IMR-90 (cell line): ENCODE measurements at regions of chr10 and their contacts with region 1.

Region 1: DNA sequence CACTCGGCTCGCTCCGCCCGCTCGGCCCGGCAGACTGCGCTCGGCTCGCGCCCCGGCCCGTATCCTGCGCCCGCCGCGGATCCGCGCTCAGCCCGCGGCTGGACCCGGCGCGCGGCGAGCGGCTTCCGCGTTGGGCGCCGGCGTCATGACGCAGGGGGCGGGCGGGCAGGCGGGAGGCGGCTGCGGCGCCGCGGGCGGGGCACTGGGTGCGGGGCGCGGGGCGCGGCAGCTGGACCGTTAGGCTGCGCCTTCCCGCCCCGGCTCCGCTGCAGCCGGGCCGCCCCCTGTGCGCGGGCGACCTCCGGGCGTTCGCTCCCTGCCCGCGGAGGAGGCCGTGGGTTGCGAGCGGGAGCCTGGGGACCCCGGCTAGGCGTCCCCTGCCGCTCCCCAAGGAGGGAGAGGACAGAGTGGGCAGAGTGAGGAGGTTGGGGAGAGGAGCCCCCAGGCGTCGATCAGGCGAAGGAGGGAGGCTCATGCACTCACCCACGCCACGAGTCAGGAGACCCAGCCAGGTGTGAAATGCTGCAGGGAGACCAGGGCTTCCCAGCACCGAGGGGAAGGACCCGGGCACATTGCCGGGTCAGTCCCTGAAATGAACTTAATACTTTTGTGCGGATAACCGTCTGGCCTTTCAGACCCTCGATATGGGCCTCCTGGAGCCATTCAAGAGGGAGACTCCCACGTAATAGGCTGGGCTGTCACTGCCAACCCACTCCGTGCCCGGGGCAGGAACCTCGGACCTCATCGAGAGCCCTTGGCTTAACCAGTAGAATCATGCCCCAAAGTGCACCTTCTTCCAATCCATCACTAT is at the start of gene PIP4K2A:
- DNase-seq: peak; percentile 67
- ATAC-seq: peak; percentile 93
- H3K4me3 ChIP-seq: peak within 1 kb of the TSS; percentile 100
- H3K27ac ChIP-seq: peak within 1 kb of the TSS; percentile 93
- H3K4me1 ChIP-seq: no peaks in the 10 kb centered on the region; the same call in 1 of the 2 replicates
- H3K27me3 ChIP-seq: no peaks in the 10 kb centered on the region
- CTCF ChIP-seq: no peak
- POLR2A ChIP-seq: no peak
- RAD21 ChIP-seq: no peak
- total RNA-seq, gene PIP4K2A: 18.1 and 21.9 TPM in 2 replicates

Region 2: GRCh38 chr10:22316285-22317120 is 398.2 kb before region 1 on chr10 and contains the start of gene COMMD3:
- CTCF ChIA-PET with region 1: no interaction called
- POLR2A ChIA-PET with region 1: no interaction called
- dilution Hi-C with region 1: no loop called
- in situ Hi-C with region 1: no loop called
- intact Hi-C with region 1: loop called (anchors 5 kb)
- DNase-seq: peak; percentile 86
- ATAC-seq: peak; percentile 74
- H3K4me3 ChIP-seq: peak within 1 kb of the TSS; percentile 76
- H3K27ac ChIP-seq: peak within 1 kb of the TSS; percentile 93
- H3K4me1 ChIP-seq: no peaks in the 10 kb centered on the region
- H3K27me3 ChIP-seq: peaks cover 2% of the 10 kb centered on the region; the same call in 1 of the 2 replicates
- CTCF ChIP-seq: no peak
- POLR2A ChIP-seq: no peak
- RAD21 ChIP-seq: no peak
- total RNA-seq, gene COMMD3: 33.1 and 44.8 TPM in 2 replicates

Region 3: GRCh38 chr10:22436884-22437619 is 277.6 kb before region 1 on chr10:
- CTCF ChIA-PET with region 1: no interaction called
- POLR2A ChIA-PET with region 1: no interaction called
- dilution Hi-C with region 1: no loop called
- in situ Hi-C with region 1: no loop called
- intact Hi-C with region 1: loop called (anchors 5 kb)
- DNase-seq: peak; percentile 89
- ATAC-seq: peak; percentile 83
- H3K4me3 ChIP-seq: peak overlapping the region; percentile 56
- H3K27ac ChIP-seq: peak overlapping the region; percentile 90
- H3K4me1 ChIP-seq: peaks cover 8% of the 10 kb centered on the region; the same call in 1 of the 2 replicates
- H3K27me3 ChIP-seq: peaks cover 7% of the 10 kb centered on the region
- CTCF ChIP-seq: no peak
- POLR2A ChIP-seq: peak; percentile 82; the same call in 1 of the 2 replicates
- RAD21 ChIP-seq: no peak

Region 4: GRCh38 chr10:22573820-22574569 is 140.7 kb before region 1 on chr10:
- CTCF ChIA-PET with region 1: interaction called, 5 read pairs
- POLR2A ChIA-PET with region 1: no interaction called
- dilution Hi-C with region 1: no loop called
- in situ Hi-C with region 1: no loop called
- intact Hi-C with region 1: loop called (anchors 5 kb)
- DNase-seq: peak; percentile 41
- ATAC-seq: peak; percentile 42; the same call in 1 of the 2 replicates
- H3K4me3 ChIP-seq: no peak overlapping the region
- H3K27ac ChIP-seq: no peak overlapping the region
- H3K4me1 ChIP-seq: no peaks in the 10 kb centered on the region
- H3K27me3 ChIP-seq: no peaks in the 10 kb centered on the region
- CTCF ChIP-seq: peak; percentile 53
- POLR2A ChIP-seq: no peak
- RAD21 ChIP-seq: peak; percentile 65

Region 5: GRCh38 chr10:22615819-22616499 is 98.7 kb before region 1 on chr10:
- CTCF ChIA-PET with region 1: no interaction called
- POLR2A ChIA-PET with region 1: no interaction called
- dilution Hi-C with region 1: no loop called
- in situ Hi-C with region 1: no loop called
- intact Hi-C with region 1: loop called (anchors 1 kb)
- DNase-seq: no peak
- ATAC-seq: no peak
- H3K4me3 ChIP-seq: no peak overlapping the region
- H3K27ac ChIP-seq: no peak overlapping the region
- H3K4me1 ChIP-seq: peaks cover 15% of the 10 kb centered on the region
- H3K27me3 ChIP-seq: no peaks in the 10 kb centered on the region
- CTCF ChIP-seq: no peak
- POLR2A ChIP-seq: no peak
- RAD21 ChIP-seq: no peak